Vagina (tissue), 2 donors: ENCODE measurements at regions of chr20 and their contacts with region 1.

Region 1: DNA sequence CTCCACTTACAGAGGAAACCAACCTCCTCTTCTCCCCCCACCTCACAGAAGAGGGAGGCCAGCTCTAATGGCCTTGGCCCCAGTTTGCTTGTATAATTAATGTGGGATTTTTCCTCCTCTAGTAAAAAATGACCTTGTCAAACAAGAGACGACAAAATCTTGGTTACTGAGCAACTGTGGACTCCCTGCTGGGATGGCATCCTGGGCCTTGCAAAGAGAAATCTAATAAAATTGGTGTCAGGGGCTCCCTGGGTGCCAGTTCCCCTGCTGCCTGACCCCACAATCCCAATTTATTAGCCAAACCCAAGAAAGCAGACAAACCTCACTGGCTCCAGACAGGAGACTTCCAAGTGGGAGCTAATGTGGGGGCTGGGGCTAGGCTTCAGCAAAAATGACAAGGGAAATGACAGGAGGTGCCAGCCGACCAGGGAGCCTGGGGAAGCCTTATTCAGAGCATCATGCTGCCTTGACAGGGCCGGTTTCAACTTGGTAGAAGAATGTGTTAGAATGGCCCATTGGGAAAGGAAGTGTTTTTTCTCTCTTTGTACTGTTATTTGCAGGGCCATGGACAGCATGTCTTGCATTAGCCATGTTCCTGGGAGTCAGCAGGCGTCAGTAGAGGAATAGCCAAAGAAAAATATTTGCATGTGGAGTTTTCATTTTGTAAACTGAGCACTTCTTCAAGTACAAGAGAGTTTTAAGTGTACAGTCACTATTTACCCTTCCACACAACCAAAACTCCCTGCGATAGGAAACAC is 816.9 kb downstream of the DHX35 start:
- DNase-seq: no peak
- H3K4me3 ChIP-seq: no peak overlapping the region
- H3K27ac ChIP-seq: no peak overlapping the region
- H3K4me1 ChIP-seq: peaks cover 15% of the 10 kb centered on the region
- H3K27me3 ChIP-seq: no peaks in the 10 kb centered on the region
- CTCF ChIP-seq: no peak
- POLR2A ChIP-seq: no peak

Region 2: DNA sequence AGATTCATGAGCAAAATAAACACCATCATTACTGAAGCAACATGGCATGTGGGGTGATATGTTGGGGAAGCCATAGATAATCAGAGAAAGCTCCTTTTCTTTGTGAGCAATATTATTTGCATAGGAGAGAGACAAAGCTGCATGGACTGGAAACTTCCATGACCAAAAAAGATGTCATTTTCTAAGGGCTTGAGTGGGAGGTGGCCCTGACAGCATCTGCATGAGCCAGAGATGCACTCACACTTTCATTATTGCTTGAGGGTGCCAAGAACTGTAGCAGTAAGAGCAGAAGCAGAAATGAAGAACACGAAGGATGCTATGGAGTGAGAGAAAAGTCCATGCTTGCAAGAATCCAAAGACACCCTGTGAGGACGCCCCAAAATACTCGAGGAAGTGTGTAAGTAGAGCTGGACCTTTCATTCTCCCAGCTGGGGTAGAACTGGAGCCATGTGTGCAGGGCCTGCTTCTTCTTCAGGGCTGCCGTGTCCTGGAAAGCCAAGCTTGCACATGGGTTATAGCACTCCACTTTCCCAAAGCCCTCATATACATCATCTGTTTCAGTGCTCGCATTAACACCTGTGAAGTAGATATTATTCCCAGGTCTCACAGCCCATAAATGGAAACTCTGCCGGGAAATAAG is 34.3 kb after region 1 on chr20:
- intact Hi-C with region 1: loop called (anchors 2 kb)
- DNase-seq: no peak
- H3K4me3 ChIP-seq: no peak overlapping the region
- H3K27ac ChIP-seq: no peak overlapping the region
- H3K4me1 ChIP-seq: no peaks in the 10 kb centered on the region
- H3K27me3 ChIP-seq: no peaks in the 10 kb centered on the region
- CTCF ChIP-seq: no peak
- POLR2A ChIP-seq: no peak

Region 3: DNA sequence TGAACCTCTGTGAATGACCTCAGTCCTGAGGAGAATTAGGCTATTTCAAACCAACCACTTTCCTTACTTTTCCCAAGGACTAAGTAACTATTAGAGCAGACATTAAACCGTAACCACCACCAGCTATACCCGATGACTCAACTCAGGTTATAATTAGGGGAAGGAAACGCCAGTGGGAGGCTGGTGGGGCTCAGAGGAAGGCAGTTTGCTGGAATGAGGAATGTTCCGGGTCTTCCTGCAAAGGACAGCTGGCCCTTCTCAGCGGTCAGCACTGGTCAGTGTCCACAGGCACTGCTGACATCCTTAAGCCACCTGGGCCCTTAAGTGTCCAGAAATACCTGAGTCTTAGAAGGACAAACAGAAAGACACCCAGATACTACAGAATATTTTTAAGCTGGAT is 394.8 kb after region 1 on chr20:
- intact Hi-C with region 1: no loop called
- DNase-seq: no peak
- H3K4me3 ChIP-seq: no peak overlapping the region
- H3K27ac ChIP-seq: no peak overlapping the region
- H3K4me1 ChIP-seq: peaks cover 3% of the 10 kb centered on the region
- H3K27me3 ChIP-seq: no peaks in the 10 kb centered on the region
- CTCF ChIP-seq: no peak
- POLR2A ChIP-seq: no peak